Endothelial cell of umbilical vein (primary cell): ENCODE measurements at regions of chr5 and their contacts with region 1.

Region 1: GRCh38 chr5:24110004-24110615 is 534.7 kb downstream of the CDH10 start:
- DNase-seq: no peak
- H3K4me3 ChIP-seq: no peak overlapping the region
- H3K27ac ChIP-seq: no peak overlapping the region
- H3K4me1 ChIP-seq: no peaks in the 10 kb centered on the region
- H3K27me3 ChIP-seq: no peaks in the 10 kb centered on the region
- CTCF ChIP-seq: no peak
- POLR2A ChIP-seq: no peak

Region 2: DNA sequence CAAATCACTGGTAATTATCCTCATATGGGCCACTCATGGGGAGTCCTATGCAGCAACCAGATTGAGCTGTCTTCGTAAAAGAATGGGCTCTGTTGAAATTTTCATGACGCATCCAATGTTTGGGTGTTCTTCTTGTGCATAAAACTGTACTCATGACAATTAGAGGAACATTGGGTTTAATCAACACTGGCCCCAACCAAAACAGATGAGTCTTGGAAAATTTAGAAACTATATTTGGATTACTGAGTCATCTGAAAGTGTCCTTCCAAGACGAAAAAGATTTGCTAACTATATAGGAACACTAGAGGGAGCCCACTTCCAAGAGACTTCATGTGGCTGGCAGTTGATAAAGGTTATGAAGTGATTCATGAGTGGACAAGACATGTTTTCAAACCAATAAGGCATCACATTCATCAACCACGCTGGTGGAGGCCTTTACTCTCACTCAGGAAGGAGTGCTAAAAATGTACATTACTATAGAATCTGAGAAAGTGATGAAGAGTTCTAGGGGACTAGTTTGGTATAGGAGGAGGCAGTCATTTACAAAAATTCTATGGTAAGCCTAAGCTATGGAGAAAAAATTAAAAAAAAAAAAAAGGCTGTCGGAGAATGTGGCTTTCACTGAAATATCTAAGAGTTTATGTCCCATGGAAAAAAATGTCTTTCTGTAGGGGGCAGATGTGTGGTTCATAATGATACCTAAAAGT is 289.2 kb before region 1 on chr5:
- CTCF ChIA-PET with region 1: interaction called, 10 read pairs
- POLR2A ChIA-PET with region 1: no interaction called
- dilution Hi-C with region 1: no loop called
- intact Hi-C with region 1: no loop called
- DNase-seq: no peak
- H3K4me3 ChIP-seq: no peak overlapping the region
- H3K27ac ChIP-seq: no peak overlapping the region
- H3K4me1 ChIP-seq: no peaks in the 10 kb centered on the region
- H3K27me3 ChIP-seq: no peaks in the 10 kb centered on the region
- CTCF ChIP-seq: no peak
- POLR2A ChIP-seq: no peak

Region 3: GRCh38 chr5:24391835-24392234 is 281.7 kb after region 1 on chr5:
- CTCF ChIA-PET with region 1: no interaction called
- POLR2A ChIA-PET with region 1: no interaction called
- dilution Hi-C with region 1: no loop called
- intact Hi-C with region 1: no loop called
- DNase-seq: no peak
- H3K4me3 ChIP-seq: no peak overlapping the region
- H3K27ac ChIP-seq: no peak overlapping the region
- H3K4me1 ChIP-seq: no peaks in the 10 kb centered on the region
- H3K27me3 ChIP-seq: no peaks in the 10 kb centered on the region
- CTCF ChIP-seq: no peak
- POLR2A ChIP-seq: no peak